ENCODE measurements at regions of chr1 and their contacts with region 1.

Region 1: GRCh38 chr1:12208764-12209494 is 20.9 kb upstream of the VPS13D start:
- DNase-seq: peak; percentile 77
- H3K4me3 ChIP-seq: no peak overlapping the region
- H3K27ac ChIP-seq: no peak overlapping the region
- H3K4me1 ChIP-seq: no peaks in the 10 kb centered on the region
- H3K27me3 ChIP-seq: peaks cover 8% of the 10 kb centered on the region

Region 2: GRCh38 chr1:12124693-12125421 is 84.1 kb before region 1 on chr1:
- in situ Hi-C with region 1: loop called (anchors 5 kb)
- DNase-seq: peak; percentile 85
- H3K4me3 ChIP-seq: no peak overlapping the region
- H3K27ac ChIP-seq: no peak overlapping the region
- H3K4me1 ChIP-seq: no peaks in the 10 kb centered on the region
- H3K27me3 ChIP-seq: no peaks in the 10 kb centered on the region

Measured in GM23248 (cell line).